CD8-positive, alpha-beta memory T cell (primary cell): ENCODE measurements at regions of chr10 and their contacts with region 1.

Region 1: GRCh38 chr10:14185316-14186045 is 145.2 kb downstream of the FRMD4A start:
- DNase-seq: peak in 4 of 5 donors; percentile 18 to 70 (median 52)
- H3K4me3 ChIP-seq: peak overlapping the region; percentile 54
- H3K4me3 Mint-ChIP-seq: peak overlapping the region; percentile 33 to 76 (median 67)
- H3K27ac ChIP-seq: peak overlapping the region; percentile 69
- H3K27ac Mint-ChIP-seq: peak overlapping the region; percentile 87 to 98 (median 94)
- H3K4me1 ChIP-seq: peaks cover 13% of the 10 kb centered on the region
- H3K4me1 Mint-ChIP-seq: peaks cover 20 to 23% (median 22%) of the 10 kb centered on the region in 3 donors
- H3K27me3 ChIP-seq: no peaks in the 10 kb centered on the region
- H3K27me3 Mint-ChIP-seq: peaks cover 21 to 28% of the 10 kb centered on the region in 2 donors

Region 2: GRCh38 chr10:14200698-14201544 is 15.4 kb after region 1 on chr10:
- CTCF ChIA-PET with region 1: interaction called, 29 read pairs
- POLR2A ChIA-PET with region 1: no interaction called
- DNase-seq: no peak
- H3K4me3 ChIP-seq: no peak overlapping the region
- H3K4me3 Mint-ChIP-seq: no peak overlapping the region
- H3K27ac ChIP-seq: no peak overlapping the region
- H3K27ac Mint-ChIP-seq: no peak overlapping the region
- H3K4me1 ChIP-seq: no peaks in the 10 kb centered on the region
- H3K4me1 Mint-ChIP-seq: no peaks in the 10 kb centered on the region
- H3K27me3 ChIP-seq: no peaks in the 10 kb centered on the region
- H3K27me3 Mint-ChIP-seq: peaks cover 27 to 34% of the 10 kb centered on the region in 2 donors